Sigmoid colon (tissue), 7 donors: ENCODE measurements at regions of chr11 and their contacts with region 1.

Region 1: DNA sequence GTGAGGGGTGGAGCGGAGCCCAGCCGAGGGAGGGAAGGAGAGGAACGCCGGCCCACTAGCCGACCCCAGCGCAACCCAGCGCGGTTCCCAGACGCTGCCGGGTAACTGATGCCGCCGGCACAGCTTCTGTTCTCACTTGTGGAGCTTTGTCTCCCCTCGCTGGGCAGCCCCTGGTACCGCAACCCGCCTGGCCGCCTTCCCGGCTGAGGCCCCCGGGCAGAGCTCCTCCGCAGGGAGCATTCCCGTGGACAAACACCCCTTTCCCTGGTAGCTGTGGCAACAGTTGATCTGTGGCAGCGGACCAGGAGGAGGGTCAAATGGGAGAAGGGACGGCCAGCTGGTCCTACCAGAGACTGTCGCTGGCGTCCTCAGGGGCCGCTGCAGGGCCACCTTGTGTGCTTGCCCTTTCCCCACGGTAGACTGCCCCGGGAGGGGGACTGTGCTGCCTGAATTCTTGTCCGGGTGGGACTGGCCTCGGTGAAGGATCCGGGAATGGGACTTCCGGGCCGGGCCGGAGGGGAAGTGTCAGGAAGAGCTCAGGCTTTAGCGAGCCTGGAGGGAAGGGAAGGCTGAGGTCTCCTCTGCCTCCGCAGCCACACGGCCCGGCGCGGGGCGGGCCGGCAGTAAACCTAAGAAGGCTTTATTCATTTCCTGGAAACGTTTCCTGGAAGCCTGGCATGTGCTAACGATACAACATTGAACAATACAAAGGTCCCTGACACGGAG is 468.0 kb downstream of the OPCML start:
- DNase-seq: peak; percentile 76
- H3K4me3 ChIP-seq: peak overlapping the region; percentile 40 to 59 (median 50)
- H3K27ac ChIP-seq: peak overlapping the region; percentile 7 to 68 (median 40)
- H3K4me1 ChIP-seq: peaks cover 0 to 7% (median 0%) of the 10 kb centered on the region in 4 donors
- H3K27me3 ChIP-seq: peaks cover 0 to 2% (median 0%) of the 10 kb centered on the region in 3 donors
- CTCF ChIP-seq: peak in 2 of 4 experiments; percentile 46
- EP300 ChIP-seq: no peak
- POLR2A ChIP-seq: no peak

Region 2: GRCh38 chr11:131694526-131695424 is 1369.5 kb before region 1 on chr11:
- intact Hi-C with region 1: loop called (anchors 10 kb)
- DNase-seq: peak; percentile 90
- H3K4me3 ChIP-seq: peak overlapping the region in 2 of 4 donors; percentile 14 to 17
- H3K27ac ChIP-seq: peak overlapping the region in 1 of 4 donors; percentile 12
- H3K4me1 ChIP-seq: peaks cover 0 to 10% (median 9%) of the 10 kb centered on the region in 4 donors
- H3K27me3 ChIP-seq: peaks cover 0 to 14% (median 0%) of the 10 kb centered on the region in 3 donors
- CTCF ChIP-seq: peak; percentile 57 to 95 (median 78)
- EP300 ChIP-seq: no peak
- POLR2A ChIP-seq: no peak